ENCODE measurements at regions of chr17 and their contacts with region 1.

Region 1: DNA sequence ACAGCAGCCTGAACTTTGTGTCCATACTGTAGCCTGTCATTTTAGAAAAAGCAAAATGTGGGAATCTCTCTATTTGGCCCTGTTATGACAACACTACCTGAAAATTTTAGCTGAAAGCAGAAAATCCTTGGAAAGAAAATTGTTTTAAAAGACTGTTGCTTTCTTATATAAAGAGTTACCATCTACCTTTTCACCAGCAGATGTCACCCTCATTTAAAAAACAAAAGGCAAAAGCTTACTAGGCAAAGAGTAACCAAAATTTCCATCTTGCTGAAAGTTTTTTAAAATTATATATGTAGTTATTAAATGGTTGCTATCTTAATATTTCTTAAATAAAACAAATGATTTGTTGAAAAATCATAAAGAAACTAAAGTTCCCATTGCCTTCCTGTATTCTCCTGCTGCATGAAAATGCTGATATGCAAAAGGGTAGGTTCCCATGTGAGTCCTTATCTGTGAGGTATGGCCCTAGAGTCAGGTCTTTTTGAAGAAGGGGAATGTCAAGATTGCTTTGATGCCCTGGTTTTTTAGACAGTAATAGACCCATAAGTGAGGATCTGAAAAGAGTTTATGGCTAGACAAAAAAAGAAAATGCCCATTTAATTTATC is 61.0 kb downstream of the TNRC6C start:
- DNase-seq: no peak
- ATAC-seq: no peak
- H3K4me3 Mint-ChIP-seq: no peak overlapping the region
- H3K27ac Mint-ChIP-seq: peak overlapping the region; percentile 90
- H3K4me1 Mint-ChIP-seq: peaks cover 31% of the 10 kb centered on the region
- H3K27me3 Mint-ChIP-seq: no peaks in the 10 kb centered on the region
- CTCF ChIP-seq: peak; percentile 72

Region 2: GRCh38 chr17:77772461-77772897 is 247.0 kb before region 1 on chr17:
- CTCF ChIA-PET with region 1: interaction called, 37 read pairs
- POLR2A ChIA-PET with region 1: no interaction called
- intact Hi-C with region 1: loop called (anchors 5 kb)
- DNase-seq: peak; percentile 78
- ATAC-seq: peak; percentile 97
- H3K4me3 Mint-ChIP-seq: no peak overlapping the region
- H3K27ac Mint-ChIP-seq: no peak overlapping the region
- H3K4me1 Mint-ChIP-seq: peaks cover 12% of the 10 kb centered on the region
- H3K27me3 Mint-ChIP-seq: no peaks in the 10 kb centered on the region
- CTCF ChIP-seq: peak; percentile 76

Region 3: GRCh38 chr17:78032166-78032565 is 12.7 kb after region 1 on chr17:
- CTCF ChIA-PET with region 1: interaction called, 45 read pairs
- POLR2A ChIA-PET with region 1: interaction called, 6 read pairs
- intact Hi-C with region 1: no loop called
- DNase-seq: no peak
- ATAC-seq: no peak
- H3K4me3 Mint-ChIP-seq: no peak overlapping the region
- H3K27ac Mint-ChIP-seq: peak overlapping the region; percentile 48
- H3K4me1 Mint-ChIP-seq: peaks cover 26% of the 10 kb centered on the region
- H3K27me3 Mint-ChIP-seq: no peaks in the 10 kb centered on the region
- CTCF ChIP-seq: no peak

Region 4: GRCh38 chr17:78058001-78058400 is 38.5 kb after region 1 on chr17:
- CTCF ChIA-PET with region 1: interaction called, 11 read pairs
- POLR2A ChIA-PET with region 1: no interaction called
- intact Hi-C with region 1: no loop called
- DNase-seq: no peak
- ATAC-seq: no peak
- H3K4me3 Mint-ChIP-seq: no peak overlapping the region
- H3K27ac Mint-ChIP-seq: no peak overlapping the region
- H3K4me1 Mint-ChIP-seq: peaks cover 30% of the 10 kb centered on the region
- H3K27me3 Mint-ChIP-seq: no peaks in the 10 kb centered on the region
- CTCF ChIP-seq: no peak

Measured in activated CD8-positive, alpha-beta T cell treated with anti-CD3 and anti-CD28 coated beads for 36 hours (primary cell).